CD8-positive, alpha-beta T cell (primary cell): ENCODE measurements at regions of chr21 and their contacts with region 1.

Region 1: GRCh38 chr21:39281207-39281606 is 32.2 kb downstream of the BRWD1 start:
- DNase-seq: no peak
- ATAC-seq: no peak
- H3K4me3 ChIP-seq: no peak overlapping the region
- H3K4me3 Mint-ChIP-seq: no peak overlapping the region
- H3K27ac ChIP-seq: no peak overlapping the region
- H3K27ac Mint-ChIP-seq: no peak overlapping the region
- H3K4me1 ChIP-seq: no peaks in the 10 kb centered on the region
- H3K4me1 Mint-ChIP-seq: peaks cover 12% of the 10 kb centered on the region
- H3K27me3 ChIP-seq: no peaks in the 10 kb centered on the region
- H3K27me3 Mint-ChIP-seq: no peaks in the 10 kb centered on the region
- CTCF ChIP-seq: no peak

Region 2: DNA sequence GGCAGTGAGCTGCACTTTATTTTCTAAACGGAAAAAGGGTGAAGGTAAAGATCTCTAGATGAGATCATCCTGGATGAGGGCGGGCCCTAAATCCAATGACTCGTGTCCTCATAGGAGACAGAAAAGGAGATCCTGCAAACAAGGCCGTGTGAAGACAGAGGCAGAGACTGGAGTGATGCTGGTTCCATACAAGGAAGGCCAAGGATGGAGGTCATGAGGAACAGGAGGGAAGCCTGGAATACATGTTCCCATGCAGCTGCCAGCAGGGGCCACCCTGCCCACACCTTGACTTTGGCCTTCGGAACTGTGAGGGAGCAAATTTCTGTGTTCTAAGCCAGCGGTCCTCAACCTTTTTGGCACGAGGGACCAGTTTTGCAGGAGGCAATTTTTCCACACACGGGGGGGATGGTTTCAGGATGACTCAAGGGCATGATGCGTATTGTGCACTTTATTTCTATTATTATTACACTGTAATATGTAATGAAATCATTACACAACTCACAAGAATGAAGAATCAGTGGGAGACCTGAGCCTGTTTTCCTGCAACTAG is 192.3 kb before region 1 on chr21:
- CTCF ChIA-PET with region 1: no interaction called
- POLR2A ChIA-PET with region 1: no interaction called
- intact Hi-C with region 1: no loop called
- DNase-seq: no peak
- ATAC-seq: no peak
- H3K4me3 ChIP-seq: no peak overlapping the region
- H3K4me3 Mint-ChIP-seq: no peak overlapping the region
- H3K27ac ChIP-seq: no peak overlapping the region
- H3K27ac Mint-ChIP-seq: no peak overlapping the region
- H3K4me1 ChIP-seq: no peaks in the 10 kb centered on the region
- H3K4me1 Mint-ChIP-seq: no peaks in the 10 kb centered on the region
- H3K27me3 ChIP-seq: no peaks in the 10 kb centered on the region
- H3K27me3 Mint-ChIP-seq: no peaks in the 10 kb centered on the region
- CTCF ChIP-seq: no peak

Region 3: GRCh38 chr21:39238275-39238674 is 42.9 kb before region 1 on chr21:
- CTCF ChIA-PET with region 1: interaction called, 3 read pairs
- POLR2A ChIA-PET with region 1: interaction called, 3 read pairs
- intact Hi-C with region 1: loop called in 1 of 2 experiments (anchors 5 kb)
- DNase-seq: no peak
- ATAC-seq: no peak
- H3K4me3 ChIP-seq: no peak overlapping the region
- H3K4me3 Mint-ChIP-seq: no peak overlapping the region
- H3K27ac ChIP-seq: no peak overlapping the region
- H3K27ac Mint-ChIP-seq: no peak overlapping the region
- H3K4me1 ChIP-seq: no peaks in the 10 kb centered on the region
- H3K4me1 Mint-ChIP-seq: peaks cover 31% of the 10 kb centered on the region
- H3K27me3 ChIP-seq: no peaks in the 10 kb centered on the region
- H3K27me3 Mint-ChIP-seq: no peaks in the 10 kb centered on the region
- CTCF ChIP-seq: no peak

Region 4: DNA sequence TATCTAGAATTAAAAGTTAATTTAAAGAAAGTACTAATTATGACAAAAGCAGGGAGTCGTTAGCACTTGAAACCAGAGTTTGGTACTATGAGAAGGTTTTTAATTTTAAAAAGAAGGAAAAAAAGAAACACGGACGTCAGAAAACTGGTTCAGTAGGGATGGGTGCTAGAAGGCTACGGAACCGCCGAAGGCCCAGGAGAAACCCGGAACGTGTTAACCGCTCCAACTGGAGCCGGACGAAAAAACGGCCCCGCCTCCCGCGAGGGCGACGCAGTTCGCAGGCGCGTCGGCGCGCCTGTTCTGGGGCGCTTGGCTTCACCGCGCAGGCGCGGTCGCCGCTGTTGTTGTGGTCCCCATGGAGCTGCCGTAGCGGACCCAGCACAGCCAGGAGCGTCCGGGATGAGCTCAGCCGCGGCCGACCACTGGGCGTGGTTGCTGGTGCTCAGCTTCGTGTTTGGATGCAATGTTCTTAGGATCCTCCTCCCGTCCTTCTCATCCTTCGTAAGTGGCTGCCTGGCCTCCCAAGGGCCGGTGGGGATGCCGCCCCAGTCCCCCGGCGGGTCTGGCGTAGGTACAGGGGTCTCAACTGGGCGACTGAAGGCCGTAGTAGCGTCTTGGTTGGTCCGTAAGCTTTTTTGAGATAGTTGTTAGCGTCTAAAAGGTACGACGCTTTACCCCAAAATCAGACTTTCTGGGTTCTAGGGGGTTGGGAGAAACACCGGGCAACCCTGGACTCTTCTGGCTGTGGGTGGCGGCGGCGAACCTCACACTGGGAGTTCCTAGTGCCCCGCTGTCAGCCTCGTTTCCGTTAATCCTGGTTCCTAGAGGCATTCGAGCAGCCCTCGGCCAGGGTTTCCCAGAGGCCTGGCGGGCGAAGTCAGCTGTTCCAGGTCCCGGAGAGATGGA is 99.0 kb after region 1 on chr21:
- CTCF ChIA-PET with region 1: no interaction called
- POLR2A ChIA-PET with region 1: no interaction called
- intact Hi-C with region 1: no loop called
- DNase-seq: peak; percentile 75 to 95 (median 89)
- ATAC-seq: peak; percentile 97
- H3K4me3 ChIP-seq: peak overlapping the region; percentile 70 to 91
- H3K4me3 Mint-ChIP-seq: peak overlapping the region; percentile 93
- H3K27ac ChIP-seq: peak overlapping the region; percentile 80 to 92
- H3K27ac Mint-ChIP-seq: peak overlapping the region; percentile 93
- H3K4me1 ChIP-seq: peaks cover 12% of the 10 kb centered on the region
- H3K4me1 Mint-ChIP-seq: peaks cover 26% of the 10 kb centered on the region
- H3K27me3 ChIP-seq: peaks cover 0 to 2% of the 10 kb centered on the region in 2 experiments
- H3K27me3 Mint-ChIP-seq: peaks cover 4% of the 10 kb centered on the region
- CTCF ChIP-seq: no peak